Mammary epithelial cell (primary cell): ENCODE measurements at regions of chr1 and their contacts with region 1.

Region 1: GRCh38 chr1:211133836-211134669 is at the start of gene KCNH1:
- DNase-seq: peak; percentile 59
- H3K4me3 ChIP-seq: peak within 1 kb of the TSS; percentile 34 to 41 (median 37)
- H3K27ac ChIP-seq: no peak within 1 kb of the TSS
- H3K4me1 ChIP-seq: peaks cover 9% of the 10 kb centered on the region
- H3K27me3 ChIP-seq: peaks cover 16% of the 10 kb centered on the region
- CTCF ChIP-seq: peak; percentile 53 to 70
- total RNA-seq, gene KCNH1: not detected

Region 2: GRCh38 chr1:210415846-210416448 is 718.1 kb before region 1 on chr1:
- CTCF ChIA-PET with region 1: no interaction called
- dilution Hi-C with region 1: no loop called
- in situ Hi-C with region 1: loop called in 1 of 2 experiments (anchors 10 kb)
- intact Hi-C with region 1: no loop called
- DNase-seq: no peak
- H3K4me3 ChIP-seq: no peak overlapping the region
- H3K27ac ChIP-seq: no peak overlapping the region
- H3K4me1 ChIP-seq: peaks cover 6% of the 10 kb centered on the region
- H3K27me3 ChIP-seq: no peaks in the 10 kb centered on the region
- CTCF ChIP-seq: no peak

Region 3: GRCh38 chr1:210464519-210465039 is 669.5 kb before region 1 on chr1:
- CTCF ChIA-PET with region 1: no interaction called
- dilution Hi-C with region 1: no loop called
- in situ Hi-C with region 1: loop called in 1 of 2 experiments (anchors 25 kb)
- intact Hi-C with region 1: no loop called
- DNase-seq: peak; percentile 65
- H3K4me3 ChIP-seq: no peak overlapping the region
- H3K27ac ChIP-seq: no peak overlapping the region
- H3K4me1 ChIP-seq: no peaks in the 10 kb centered on the region
- H3K27me3 ChIP-seq: peaks cover 3% of the 10 kb centered on the region
- CTCF ChIP-seq: no peak

Region 4: GRCh38 chr1:210932104-210932503 is 201.9 kb before region 1 on chr1:
- CTCF ChIA-PET with region 1: no interaction called
- dilution Hi-C with region 1: no loop called
- in situ Hi-C with region 1: no loop called
- intact Hi-C with region 1: no loop called
- DNase-seq: no peak
- H3K4me3 ChIP-seq: no peak overlapping the region
- H3K27ac ChIP-seq: no peak overlapping the region
- H3K4me1 ChIP-seq: no peaks in the 10 kb centered on the region
- H3K27me3 ChIP-seq: no peaks in the 10 kb centered on the region
- CTCF ChIP-seq: no peak

Region 5: DNA sequence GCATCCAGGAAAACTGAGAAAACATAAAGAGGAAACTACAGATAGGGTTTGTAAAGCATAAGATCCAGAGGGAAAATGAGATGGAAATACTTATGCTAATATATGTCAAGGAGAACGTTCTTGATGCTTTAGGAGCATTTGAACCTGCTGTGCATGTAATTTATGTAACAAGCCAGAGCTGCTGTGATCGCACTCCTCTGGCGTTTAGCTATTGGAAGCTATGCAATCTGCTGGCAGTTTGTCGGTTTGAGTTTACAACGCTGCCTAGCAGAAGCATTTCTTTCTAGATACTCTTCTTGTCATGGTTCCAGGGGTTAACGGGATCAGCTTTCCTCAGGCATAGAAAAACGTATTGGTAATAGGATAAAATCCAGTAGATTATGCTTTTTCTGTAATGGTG is 182.8 kb before region 1 on chr1:
- CTCF ChIA-PET with region 1: no interaction called
- dilution Hi-C with region 1: no loop called
- in situ Hi-C with region 1: no loop called
- intact Hi-C with region 1: loop called (anchors 5 kb)
- DNase-seq: no peak
- H3K4me3 ChIP-seq: no peak overlapping the region
- H3K27ac ChIP-seq: no peak overlapping the region
- H3K4me1 ChIP-seq: no peaks in the 10 kb centered on the region
- H3K27me3 ChIP-seq: peaks cover 1% of the 10 kb centered on the region
- CTCF ChIP-seq: no peak

Region 6: DNA sequence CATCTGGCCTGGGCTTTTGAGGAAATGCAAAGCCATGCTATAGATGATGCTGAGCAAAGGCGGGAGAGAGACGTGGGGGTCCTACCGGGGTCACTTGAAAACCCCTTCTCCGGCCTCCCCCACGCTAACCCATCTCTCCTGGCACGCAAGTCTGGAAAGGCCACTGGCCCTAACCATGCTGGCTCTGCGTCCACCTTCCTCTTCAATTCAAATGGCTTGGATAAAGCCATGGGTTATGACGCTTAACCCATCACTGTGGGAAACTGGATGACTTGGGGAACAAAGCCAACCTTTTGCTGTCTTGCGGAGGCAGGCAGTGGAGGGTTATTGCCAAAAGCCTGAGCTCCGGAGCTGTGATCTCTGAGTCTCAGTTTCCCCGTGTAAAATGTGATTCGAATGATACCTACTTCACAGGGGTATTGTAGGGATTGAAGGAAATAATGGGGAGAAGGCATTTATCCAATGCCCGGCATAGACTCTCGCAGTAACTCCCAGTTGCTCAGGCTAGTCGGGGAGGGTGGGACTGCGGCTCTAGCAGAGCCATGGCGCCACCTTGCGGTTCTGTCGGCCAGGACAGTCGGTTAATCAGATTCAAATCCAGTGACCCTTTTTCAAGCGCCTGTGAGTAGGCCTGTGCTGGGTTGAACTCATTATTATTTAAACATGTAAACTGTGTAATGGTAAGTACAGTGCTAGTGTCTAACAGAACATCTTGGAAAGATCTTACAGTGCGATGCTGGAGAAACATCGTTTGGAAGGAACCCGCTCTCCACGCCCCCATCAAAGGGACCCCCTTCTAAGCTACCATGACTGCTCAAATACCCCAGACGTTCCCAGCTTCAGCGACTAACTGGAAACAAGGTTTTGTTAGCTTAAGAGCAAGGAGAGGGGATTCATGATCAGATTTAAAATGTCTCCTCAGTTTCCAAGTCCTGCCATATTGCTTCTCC is 521.1 kb after region 1 on chr1:
- CTCF ChIA-PET with region 1: no interaction called
- dilution Hi-C with region 1: no loop called
- in situ Hi-C with region 1: no loop called
- intact Hi-C with region 1: loop called (anchors 2 kb)
- DNase-seq: peak; percentile 68
- H3K4me3 ChIP-seq: no peak overlapping the region
- H3K27ac ChIP-seq: no peak overlapping the region
- H3K4me1 ChIP-seq: peaks cover 13% of the 10 kb centered on the region
- H3K27me3 ChIP-seq: no peaks in the 10 kb centered on the region
- CTCF ChIP-seq: peak; percentile 86 to 97